ENCODE measurements at regions of chr9 and their contacts with region 1.

Region 1: DNA sequence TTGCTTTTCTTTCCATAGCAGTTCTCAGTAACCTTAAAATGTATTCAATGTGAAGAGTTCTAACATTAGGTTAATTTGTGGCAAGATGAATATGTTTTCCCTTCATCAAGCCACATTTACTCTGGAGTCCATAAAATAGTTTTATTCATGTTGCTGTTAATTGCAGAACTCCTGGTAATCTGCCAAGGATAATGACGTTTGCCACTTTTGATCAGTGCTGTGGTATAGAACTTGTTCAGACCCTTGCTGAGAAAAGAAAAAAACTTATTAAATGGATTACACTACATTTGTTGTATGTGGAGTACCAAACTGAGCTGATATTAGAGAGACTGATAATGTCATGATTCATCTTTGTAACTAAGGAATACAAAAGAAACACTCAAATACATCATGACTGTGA is 212.4 kb upstream of the DMAC1 start:
- DNase-seq: no peak
- ATAC-seq: no peak
- H3K4me3 ChIP-seq: no peak overlapping the region
- H3K27ac ChIP-seq: no peak overlapping the region
- H3K4me1 ChIP-seq: no peaks in the 10 kb centered on the region
- H3K27me3 ChIP-seq: no peaks in the 10 kb centered on the region
- CTCF ChIP-seq: no peak

Region 2: GRCh38 chr9:6153425-6153824 is 1858.5 kb before region 1 on chr9:
- intact Hi-C with region 1: loop called in 1 of 10 experiments (anchors 10 kb)
- DNase-seq: no peak
- ATAC-seq: no peak
- H3K4me3 ChIP-seq: no peak overlapping the region
- H3K27ac ChIP-seq: no peak overlapping the region
- H3K4me1 ChIP-seq: peaks cover 0 to 4% (median 0%) of the 10 kb centered on the region in 9 donors
- H3K27me3 ChIP-seq: no peaks in the 10 kb centered on the region
- CTCF ChIP-seq: no peak